ENCODE measurements at regions of chr10 and their contacts with region 1.

Region 1: GRCh38 chr10:43204943-43205671 is 61.8 kb downstream of the RASGEF1A start:
- DNase-seq: peak; percentile 81
- ATAC-seq: peak; percentile 16
- H3K4me3 Mint-ChIP-seq: no peak overlapping the region
- H3K27ac Mint-ChIP-seq: no peak overlapping the region
- H3K4me1 Mint-ChIP-seq: 0 out of 2 replicates have a peak, but pooled peaks cover 4% of the 10 kb centered on the region
- H3K27me3 Mint-ChIP-seq: no peaks in the 10 kb centered on the region
- CTCF ChIP-seq: peak; percentile 68

Region 2: GRCh38 chr10:43170491-43170890 is 34.6 kb before region 1 on chr10:
- CTCF ChIA-PET with region 1: interaction called, 45 read pairs
- POLR2A ChIA-PET with region 1: interaction called, 3 read pairs
- DNase-seq: no peak
- ATAC-seq: peak; percentile 32; the same call in 1 of the 2 replicates
- H3K4me3 Mint-ChIP-seq: no peak overlapping the region
- H3K27ac Mint-ChIP-seq: no peak overlapping the region
- H3K4me1 Mint-ChIP-seq: peaks cover 5% of the 10 kb centered on the region
- H3K27me3 Mint-ChIP-seq: no peaks in the 10 kb centered on the region
- CTCF ChIP-seq: no peak

Region 3: GRCh38 chr10:43221419-43222209 is 16.5 kb after region 1 on chr10:
- CTCF ChIA-PET with region 1: interaction called, 73 read pairs
- POLR2A ChIA-PET with region 1: no interaction called
- DNase-seq: peak; percentile 75
- ATAC-seq: peak; percentile 97
- H3K4me3 Mint-ChIP-seq: no peak overlapping the region
- H3K27ac Mint-ChIP-seq: no peak overlapping the region
- H3K4me1 Mint-ChIP-seq: peaks cover 8% of the 10 kb centered on the region
- H3K27me3 Mint-ChIP-seq: no peaks in the 10 kb centered on the region
- CTCF ChIP-seq: no peak

Region 4: DNA sequence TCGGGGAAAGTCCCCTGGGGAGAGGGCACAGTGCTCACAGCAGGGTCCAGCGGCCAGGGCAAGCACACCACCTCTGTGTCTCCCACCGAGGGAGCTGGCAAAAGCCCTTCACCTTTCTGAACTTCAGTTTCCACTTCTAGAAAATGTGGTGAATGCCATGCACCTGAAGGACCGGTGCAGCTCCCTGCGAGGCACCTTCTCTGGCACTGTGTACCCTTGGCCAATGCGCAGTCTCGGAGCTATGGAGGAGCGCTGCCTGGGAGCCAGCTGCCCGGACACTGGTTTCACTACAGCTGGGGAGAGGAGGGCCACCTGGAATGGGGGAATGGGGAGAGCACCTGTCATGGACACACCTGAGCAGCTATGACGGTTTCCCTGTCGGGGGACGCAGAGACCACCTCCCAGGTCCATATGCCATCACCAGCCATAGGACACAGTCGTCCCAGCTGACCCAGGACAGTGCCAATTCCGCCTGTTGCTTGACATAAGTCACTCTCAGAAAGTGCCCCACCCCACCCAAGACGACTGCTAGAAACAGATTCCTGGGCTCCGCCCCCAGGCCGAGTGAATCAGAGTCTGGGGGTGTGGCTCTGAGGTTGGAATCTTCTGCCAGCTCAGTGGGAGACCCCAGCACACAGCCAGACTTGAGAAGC is 45.0 kb after region 1 on chr10:
- CTCF ChIA-PET with region 1: interaction called, 63 read pairs
- POLR2A ChIA-PET with region 1: no interaction called
- DNase-seq: peak; percentile 55
- ATAC-seq: peak; percentile 67
- H3K4me3 Mint-ChIP-seq: no peak overlapping the region
- H3K27ac Mint-ChIP-seq: no peak overlapping the region
- H3K4me1 Mint-ChIP-seq: peaks cover 19% of the 10 kb centered on the region
- H3K27me3 Mint-ChIP-seq: peaks cover 3% of the 10 kb centered on the region; the same call in 1 of the 2 replicates
- CTCF ChIP-seq: no peak

Region 5: GRCh38 chr10:43265799-43266721 is 61.0 kb after region 1 on chr10:
- CTCF ChIA-PET with region 1: interaction called, 94 read pairs
- POLR2A ChIA-PET with region 1: no interaction called
- DNase-seq: peak; percentile 55
- ATAC-seq: peak; percentile 61
- H3K4me3 Mint-ChIP-seq: peak overlapping the region; percentile 74
- H3K27ac Mint-ChIP-seq: no peak overlapping the region
- H3K4me1 Mint-ChIP-seq: peaks cover 7% of the 10 kb centered on the region
- H3K27me3 Mint-ChIP-seq: peaks cover 54% of the 10 kb centered on the region
- CTCF ChIP-seq: no peak

Region 6: GRCh38 chr10:43322769-43323168 is 117.7 kb after region 1 on chr10:
- CTCF ChIA-PET with region 1: interaction called, 29 read pairs
- POLR2A ChIA-PET with region 1: no interaction called
- DNase-seq: peak; percentile 99
- ATAC-seq: peak; percentile 99
- H3K4me3 Mint-ChIP-seq: peak overlapping the region; percentile 62
- H3K27ac Mint-ChIP-seq: no peak overlapping the region
- H3K4me1 Mint-ChIP-seq: peaks cover 33% of the 10 kb centered on the region
- H3K27me3 Mint-ChIP-seq: no peaks in the 10 kb centered on the region; the same call in 1 of the 2 replicates
- CTCF ChIP-seq: no peak